Pancreas (tissue), 10 donors: ENCODE measurements at regions of chr4 and their contacts with region 1.

Region 1: DNA sequence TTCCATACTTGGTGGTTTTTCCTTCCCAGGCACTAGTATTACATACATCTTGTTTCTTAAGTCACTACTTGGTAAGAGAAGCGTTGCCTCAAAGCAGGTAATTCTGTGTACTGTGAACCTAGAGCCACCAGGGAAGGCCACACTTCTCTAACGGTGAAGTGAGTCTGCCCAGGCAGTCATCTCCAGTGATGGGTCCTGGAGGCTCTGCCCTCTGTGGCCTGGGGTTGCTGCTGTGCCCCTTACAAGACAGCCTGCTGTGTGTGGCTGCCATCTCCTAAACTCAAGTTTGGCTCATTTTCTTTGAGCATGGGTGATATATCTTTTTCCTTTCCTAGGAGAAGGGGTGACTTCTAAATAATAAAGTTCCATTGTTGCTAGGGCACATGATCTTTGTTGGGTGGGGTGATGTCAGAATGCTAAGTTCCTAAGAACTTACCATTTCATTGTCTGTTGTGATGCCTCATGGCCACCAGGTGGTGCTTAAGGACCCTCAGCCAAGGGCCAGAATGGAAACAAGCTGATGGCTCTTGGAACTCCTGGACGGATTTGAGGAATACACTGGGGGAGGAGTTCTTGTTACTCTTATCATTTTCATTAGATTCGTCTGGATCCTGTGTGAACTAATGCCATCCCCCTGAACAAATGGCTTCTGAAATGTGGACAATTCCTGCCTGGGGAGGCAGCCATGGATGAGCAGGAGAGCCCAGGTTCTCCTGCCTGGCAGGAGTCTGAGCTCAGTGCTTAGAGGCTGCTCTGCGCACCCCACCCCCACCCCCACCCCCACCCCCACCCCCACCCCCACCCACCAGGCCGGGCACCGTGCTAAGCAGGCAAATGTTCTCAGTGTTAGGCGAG is 41.1 kb upstream of the WDR1 start:
- DNase-seq: peak in 4 of 6 donors; percentile 25 to 59 (median 34)
- ATAC-seq: peak; percentile 55 to 89 (median 80)
- H3K4me3 ChIP-seq: no peak overlapping the region
- H3K27ac ChIP-seq: no peak overlapping the region
- H3K4me1 ChIP-seq: peaks cover 0 to 4% (median 0%) of the 10 kb centered on the region in 3 donors
- H3K27me3 ChIP-seq: no peaks in the 10 kb centered on the region
- CTCF ChIP-seq: peak; percentile 61 to 77 (median 65)

Region 2: DNA sequence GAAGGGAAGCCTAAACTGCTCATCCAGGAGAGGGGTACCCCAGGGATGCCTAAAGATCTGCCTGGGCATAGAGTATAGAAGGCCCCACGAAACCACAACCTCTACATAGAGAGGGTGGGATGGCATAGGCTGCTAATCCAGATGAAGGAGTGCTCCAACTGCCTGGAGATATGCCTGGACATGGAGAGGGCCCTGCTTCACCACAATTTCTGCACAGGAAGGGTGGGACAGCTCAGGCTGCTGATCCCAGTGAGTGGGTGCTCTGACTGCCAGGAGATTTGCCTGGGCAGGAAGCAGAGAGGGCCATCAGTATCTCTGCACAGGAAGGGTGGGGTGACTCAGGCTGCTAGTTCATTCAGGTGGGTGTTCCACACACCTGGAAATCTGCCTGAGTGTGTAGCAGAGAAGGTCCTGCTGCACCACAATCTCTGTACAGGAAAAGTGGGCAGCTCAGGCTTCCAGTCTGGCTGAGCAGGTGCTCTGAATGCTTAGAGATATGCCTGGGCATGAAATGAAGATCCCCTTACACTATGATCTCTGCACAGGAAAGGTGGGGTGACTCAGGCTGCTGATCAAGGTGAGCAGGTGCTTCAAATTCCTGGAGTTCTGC is 238.4 kb after region 1 on chr4:
- intact Hi-C with region 1: loop called in 2 of 3 experiments (anchors 5 kb)
- DNase-seq: no peak
- ATAC-seq: no peak
- H3K4me3 ChIP-seq: no peak overlapping the region
- H3K27ac ChIP-seq: no peak overlapping the region
- H3K4me1 ChIP-seq: no peaks in the 10 kb centered on the region
- H3K27me3 ChIP-seq: no peaks in the 10 kb centered on the region
- CTCF ChIP-seq: no peak

Region 3: GRCh38 chr4:10403633-10404445 is 246.1 kb after region 1 on chr4:
- intact Hi-C with region 1: loop called in 2 of 3 experiments (anchors 5 kb)
- DNase-seq: peak in 1 of 6 donors; percentile 14
- ATAC-seq: peak in 3 of 4 donors; percentile 53 to 66 (median 58)
- H3K4me3 ChIP-seq: no peak overlapping the region
- H3K27ac ChIP-seq: no peak overlapping the region
- H3K4me1 ChIP-seq: no peaks in the 10 kb centered on the region
- H3K27me3 ChIP-seq: no peaks in the 10 kb centered on the region
- CTCF ChIP-seq: peak in 1 of 4 donors; percentile 18

Region 4: GRCh38 chr4:10554694-10555093 is 397.0 kb after region 1 on chr4:
- intact Hi-C with region 1: loop called in 2 of 3 experiments (anchors 5 to 10 kb)
- DNase-seq: peak in 2 of 6 donors; percentile 11 to 50
- ATAC-seq: peak; percentile 56 to 87 (median 84)
- H3K4me3 ChIP-seq: no peak overlapping the region
- H3K27ac ChIP-seq: no peak overlapping the region
- H3K4me1 ChIP-seq: no peaks in the 10 kb centered on the region
- H3K27me3 ChIP-seq: peaks cover 0 to 4% (median 0%) of the 10 kb centered on the region in 4 donors
- CTCF ChIP-seq: peak; percentile 65 to 76 (median 71)